ENCODE measurements at regions of chr7 and their contacts with region 1.

Region 1: GRCh38 chr7:101235050-101235449 is 2.6 kb downstream of the CLDN15 start:
- DNase-seq: no peak
- H3K4me3 ChIP-seq: no peak overlapping the region
- H3K27ac ChIP-seq: no peak overlapping the region
- H3K4me1 ChIP-seq: peaks cover 0 to 4% of the 10 kb centered on the region in 2 donors
- H3K27me3 ChIP-seq: no peaks in the 10 kb centered on the region
- CTCF ChIP-seq: no peak
- POLR2A ChIP-seq: no peak

Region 2: DNA sequence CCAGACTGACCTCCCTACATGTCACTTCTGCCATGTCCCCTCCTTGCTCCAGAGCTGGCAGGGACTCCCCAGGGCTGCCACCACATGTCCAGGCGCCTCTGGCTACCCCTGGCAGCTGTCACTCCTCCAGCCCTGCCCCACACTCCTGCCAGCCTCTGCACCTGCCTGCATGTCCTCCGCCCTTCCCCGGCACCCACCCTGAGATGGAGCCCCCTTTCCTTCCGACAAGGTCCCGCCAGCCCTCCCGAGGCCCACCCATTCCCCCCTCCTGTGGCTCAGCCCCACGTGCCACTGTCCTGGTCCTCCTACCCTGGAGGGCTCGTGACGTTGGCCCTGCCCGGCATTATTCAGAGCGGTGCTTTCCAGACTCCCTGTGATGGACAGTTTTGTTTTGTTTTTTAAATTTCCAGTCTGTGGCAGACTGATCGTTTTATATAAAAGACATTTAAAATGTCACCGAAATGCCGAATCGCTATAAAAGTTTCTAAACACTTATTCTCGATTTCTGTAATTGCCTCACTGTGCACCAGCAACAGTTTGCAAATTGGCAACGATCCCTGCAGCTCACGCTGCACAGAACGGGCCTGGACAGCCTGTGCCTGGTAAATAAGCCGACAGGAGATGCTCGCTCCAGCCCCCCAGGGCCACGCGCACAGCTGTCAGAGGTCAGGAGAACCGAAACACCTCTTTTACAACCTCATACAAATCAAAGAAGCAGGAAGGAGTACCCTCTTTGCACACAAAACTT is 940.5 kb after region 1 on chr7:
- intact Hi-C with region 1: loop called (anchors 5 kb)
- DNase-seq: no peak
- H3K4me3 ChIP-seq: no peak overlapping the region
- H3K27ac ChIP-seq: no peak overlapping the region
- H3K4me1 ChIP-seq: no peaks in the 10 kb centered on the region
- H3K27me3 ChIP-seq: no peaks in the 10 kb centered on the region
- CTCF ChIP-seq: no peak
- POLR2A ChIP-seq: no peak